PC-3 (cell line): ENCODE measurements at regions of chr1 and their contacts with region 1.

Region 1: DNA sequence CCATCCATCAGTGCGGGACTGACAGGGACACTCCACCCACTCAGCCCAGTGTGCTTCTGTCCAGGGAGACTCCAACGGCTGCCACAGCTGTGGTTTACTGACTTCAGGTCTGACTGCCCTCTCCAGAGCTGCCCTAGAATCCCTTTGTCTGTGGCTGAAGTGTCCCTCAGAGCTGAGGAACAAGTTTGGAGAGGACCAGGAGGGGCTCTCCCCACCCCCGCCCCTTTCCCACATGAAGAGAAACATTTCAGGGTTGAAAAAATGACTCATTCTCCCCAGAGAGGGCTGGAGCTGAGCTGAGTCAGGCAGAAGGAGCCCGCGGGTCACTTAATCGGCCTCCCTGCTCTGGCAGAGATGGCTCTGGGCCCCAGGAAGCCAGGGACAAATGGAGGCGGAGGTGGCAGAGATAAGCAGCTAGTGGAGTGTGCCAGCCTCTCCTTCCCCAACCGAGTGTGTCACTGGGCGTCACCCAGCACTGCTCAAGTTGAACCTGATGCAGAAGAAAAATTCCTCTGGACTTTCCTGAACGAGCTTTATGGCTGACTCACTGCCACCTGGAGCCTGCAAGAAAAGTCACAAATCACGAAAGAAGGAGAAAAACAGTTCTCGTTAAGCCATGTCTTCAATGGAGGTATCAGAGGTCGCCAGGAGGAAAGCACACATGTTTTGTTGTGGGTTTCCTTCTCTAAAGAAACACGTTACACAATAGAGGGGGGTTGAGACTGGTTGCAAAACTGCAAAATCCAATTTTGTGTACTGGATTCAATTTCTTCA is 34.3 kb upstream of the ECE1 start:
- DNase-seq: peak; percentile 96
- ATAC-seq: peak; percentile 96
- H3K4me3 ChIP-seq: peak overlapping the region; percentile 40; the same call in 1 of the 2 replicates
- H3K27ac ChIP-seq: peak overlapping the region; percentile 95
- H3K4me1 ChIP-seq: peaks cover 57% of the 10 kb centered on the region
- H3K27me3 ChIP-seq: no peaks in the 10 kb centered on the region
- CTCF ChIP-seq: no peak

Region 2: DNA sequence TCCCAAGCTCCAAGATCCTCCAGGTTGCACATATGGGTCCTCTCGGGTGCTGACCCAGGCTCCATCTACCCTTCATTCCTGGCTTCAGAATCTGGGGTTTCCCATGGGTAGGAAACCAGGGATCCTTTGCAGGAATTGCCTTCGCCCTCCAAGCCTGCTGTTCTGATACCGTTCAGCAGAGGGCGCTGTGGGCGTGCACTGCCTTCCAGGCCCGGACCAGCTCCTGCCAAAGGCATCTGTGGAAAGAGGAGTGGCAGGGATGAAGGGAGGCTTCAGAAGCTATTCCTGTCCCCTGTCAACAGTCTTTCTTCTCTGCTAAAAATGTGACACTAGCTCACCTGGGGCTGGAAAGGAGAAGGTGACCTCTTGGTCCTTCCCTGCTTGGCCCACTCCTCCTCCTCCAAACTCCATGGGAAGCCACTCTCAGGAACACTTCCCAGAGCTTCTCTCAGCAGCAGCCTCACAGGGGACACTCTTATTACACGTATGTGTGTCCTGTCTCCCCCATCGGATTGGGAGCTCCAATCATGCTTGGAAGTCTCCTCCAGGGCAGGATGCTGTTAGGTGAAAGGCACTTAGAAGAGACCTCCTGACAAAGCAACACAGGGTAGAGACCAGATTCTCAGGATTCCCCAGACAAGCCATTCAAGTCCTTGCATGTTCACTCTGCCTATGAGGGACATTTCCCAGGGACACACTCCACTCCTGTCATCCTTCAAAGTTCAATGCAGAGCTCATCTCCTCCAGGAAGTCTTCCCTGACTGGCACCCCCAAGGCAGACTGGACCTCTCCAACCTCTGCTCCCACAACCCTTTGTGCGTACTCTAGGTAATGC is 962.5 kb before region 1 on chr1:
- CTCF ChIA-PET with region 1: no interaction called
- POLR2A ChIA-PET with region 1: no interaction called
- intact Hi-C with region 1: no loop called
- DNase-seq: peak; percentile 75
- ATAC-seq: no peak
- H3K4me3 ChIP-seq: no peak overlapping the region
- H3K27ac ChIP-seq: no peak overlapping the region
- H3K4me1 ChIP-seq: peaks cover 37% of the 10 kb centered on the region
- H3K27me3 ChIP-seq: peaks cover 17% of the 10 kb centered on the region
- CTCF ChIP-seq: peak; percentile 92

Region 3: DNA sequence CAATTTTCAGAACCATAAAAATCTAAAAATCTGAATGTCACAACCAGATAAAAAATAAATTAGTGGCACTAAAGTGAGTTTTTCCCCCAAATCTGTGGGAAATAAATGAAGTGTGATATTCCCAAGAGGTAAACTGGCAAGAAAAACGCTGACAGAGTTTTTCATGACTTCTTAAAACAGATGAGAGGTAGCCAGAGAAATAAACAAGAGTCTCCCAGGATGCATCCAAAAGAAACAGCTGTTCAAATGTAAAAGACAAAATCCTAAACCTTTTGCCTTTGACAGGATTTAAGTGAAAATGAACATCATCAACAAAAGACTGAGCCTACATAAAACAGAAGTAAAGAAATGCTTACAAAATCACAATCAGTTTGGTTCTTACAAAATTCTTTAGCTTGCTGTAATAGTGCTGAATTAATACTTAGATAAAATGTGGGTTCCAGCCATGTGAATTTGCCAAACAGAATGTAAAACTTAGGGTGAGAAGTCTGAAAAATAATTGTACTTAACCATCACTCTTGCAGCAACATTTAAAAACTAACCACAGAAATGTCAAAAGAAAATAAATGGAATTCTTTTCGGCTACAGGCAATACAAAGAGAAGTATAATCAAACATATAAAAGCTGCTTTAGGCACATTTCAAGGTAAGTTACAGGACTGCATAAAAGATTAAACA is 281.5 kb before region 1 on chr1:
- CTCF ChIA-PET with region 1: no interaction called
- POLR2A ChIA-PET with region 1: interaction called, 14 read pairs
- intact Hi-C with region 1: no loop called
- DNase-seq: no peak
- ATAC-seq: no peak
- H3K4me3 ChIP-seq: no peak overlapping the region
- H3K27ac ChIP-seq: no peak overlapping the region
- H3K4me1 ChIP-seq: no peaks in the 10 kb centered on the region
- H3K27me3 ChIP-seq: no peaks in the 10 kb centered on the region
- CTCF ChIP-seq: no peak

Region 4: GRCh38 chr1:21077085-21077484 is 247.5 kb before region 1 on chr1:
- CTCF ChIA-PET with region 1: no interaction called
- POLR2A ChIA-PET with region 1: no interaction called
- intact Hi-C with region 1: no loop called
- DNase-seq: peak; percentile 28
- ATAC-seq: no peak
- H3K4me3 ChIP-seq: no peak overlapping the region
- H3K27ac ChIP-seq: no peak overlapping the region
- H3K4me1 ChIP-seq: peaks cover 5% of the 10 kb centered on the region; the same call in 1 of the 2 replicates
- H3K27me3 ChIP-seq: no peaks in the 10 kb centered on the region
- CTCF ChIP-seq: no peak

Region 5: GRCh38 chr1:21255278-21255942 is 69.1 kb before region 1 on chr1:
- CTCF ChIA-PET with region 1: interaction called, 14 read pairs
- POLR2A ChIA-PET with region 1: no interaction called
- intact Hi-C with region 1: no loop called
- DNase-seq: peak; percentile 92
- ATAC-seq: peak; percentile 60
- H3K4me3 ChIP-seq: no peak overlapping the region
- H3K27ac ChIP-seq: no peak overlapping the region
- H3K4me1 ChIP-seq: peaks cover 21% of the 10 kb centered on the region
- H3K27me3 ChIP-seq: no peaks in the 10 kb centered on the region
- CTCF ChIP-seq: peak; percentile 89

Region 6: GRCh38 chr1:21355956-21356355 is 31.4 kb after region 1 on chr1:
- CTCF ChIA-PET with region 1: interaction called, 11 read pairs
- POLR2A ChIA-PET with region 1: no interaction called
- intact Hi-C with region 1: no loop called
- DNase-seq: no peak
- ATAC-seq: peak; percentile 46
- H3K4me3 ChIP-seq: no peak overlapping the region
- H3K27ac ChIP-seq: no peak overlapping the region
- H3K4me1 ChIP-seq: no peaks in the 10 kb centered on the region
- H3K27me3 ChIP-seq: no peaks in the 10 kb centered on the region
- CTCF ChIP-seq: no peak